ENCODE measurements at regions of chr17 and their contacts with region 1.

Region 1: DNA sequence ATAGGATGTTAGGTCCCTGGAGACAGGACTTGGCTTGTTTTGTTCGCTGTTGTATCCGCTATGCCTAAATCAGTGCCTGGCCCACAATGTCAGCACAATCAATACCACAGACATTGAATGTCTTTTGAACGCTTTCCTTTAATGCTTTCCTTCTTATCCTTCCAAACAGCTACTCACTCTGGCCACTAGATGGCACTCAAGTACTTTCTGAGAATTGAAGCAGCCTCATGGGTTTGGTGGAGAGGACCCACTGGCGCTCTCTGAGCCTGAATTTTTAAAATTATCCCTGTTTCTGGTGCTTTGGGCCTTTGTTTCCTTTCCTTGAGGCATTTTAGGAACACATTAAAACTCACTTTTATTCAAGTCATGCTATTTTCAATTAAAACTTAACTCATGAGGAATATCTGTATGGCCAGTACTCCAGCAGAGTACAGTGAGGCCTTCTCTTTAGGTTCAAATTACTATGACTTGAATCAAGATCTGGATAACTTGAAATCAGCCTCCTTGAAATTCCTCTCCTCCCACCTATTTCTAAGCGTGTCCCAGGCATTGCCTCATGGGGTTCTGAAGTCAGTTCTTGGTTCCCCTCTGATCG is 3.2 kb upstream of the NLRP1 start:
- DNase-seq: peak in 1 of 2 donors; percentile 92
- ATAC-seq: peak in 2 of 3 donors; percentile 16 to 25
- H3K4me3 ChIP-seq: no peak overlapping the region
- H3K4me3 Mint-ChIP-seq: peak overlapping the region; percentile 32
- H3K27ac ChIP-seq: no peak overlapping the region
- H3K27ac Mint-ChIP-seq: peak overlapping the region; percentile 49 to 59
- H3K4me1 ChIP-seq: peaks cover 35% of the 10 kb centered on the region
- H3K4me1 Mint-ChIP-seq: peaks cover 25 to 29% of the 10 kb centered on the region in 2 donors
- H3K27me3 ChIP-seq: no peaks in the 10 kb centered on the region
- H3K27me3 Mint-ChIP-seq: peaks cover 0 to 3% of the 10 kb centered on the region in 2 donors
- CTCF ChIP-seq: peak; percentile 81

Region 2: GRCh38 chr17:5598457-5598856 is 10.9 kb after region 1 on chr17:
- intact Hi-C with region 1: no loop called
- DNase-seq: no peak
- ATAC-seq: no peak
- H3K4me3 ChIP-seq: no peak overlapping the region
- H3K4me3 Mint-ChIP-seq: no peak overlapping the region
- H3K27ac ChIP-seq: no peak overlapping the region
- H3K27ac Mint-ChIP-seq: no peak overlapping the region
- H3K4me1 ChIP-seq: no peaks in the 10 kb centered on the region
- H3K4me1 Mint-ChIP-seq: no peaks in the 10 kb centered on the region
- H3K27me3 ChIP-seq: peaks cover 4% of the 10 kb centered on the region
- H3K27me3 Mint-ChIP-seq: peaks cover 41 to 78% of the 10 kb centered on the region in 2 donors
- CTCF ChIP-seq: no peak

Region 3: GRCh38 chr17:5706577-5707216 is 119.2 kb after region 1 on chr17:
- intact Hi-C with region 1: loop called (anchors 1 kb)
- DNase-seq: peak; percentile 50 to 75
- ATAC-seq: peak in 2 of 3 donors; percentile 57 to 76
- H3K4me3 ChIP-seq: no peak overlapping the region
- H3K4me3 Mint-ChIP-seq: no peak overlapping the region
- H3K27ac ChIP-seq: no peak overlapping the region
- H3K27ac Mint-ChIP-seq: no peak overlapping the region
- H3K4me1 ChIP-seq: no peaks in the 10 kb centered on the region
- H3K4me1 Mint-ChIP-seq: no peaks in the 10 kb centered on the region
- H3K27me3 ChIP-seq: no peaks in the 10 kb centered on the region
- H3K27me3 Mint-ChIP-seq: peaks cover 30 to 44% of the 10 kb centered on the region in 2 donors
- CTCF ChIP-seq: peak; percentile 60

Region 4: GRCh38 chr17:6421700-6422604 is 834.4 kb after region 1 on chr17:
- intact Hi-C with region 1: loop called (anchors 1 kb)
- DNase-seq: peak; percentile 68 to 82
- ATAC-seq: peak; percentile 73 to 92 (median 91)
- H3K4me3 ChIP-seq: no peak overlapping the region
- H3K4me3 Mint-ChIP-seq: no peak overlapping the region
- H3K27ac ChIP-seq: no peak overlapping the region
- H3K27ac Mint-ChIP-seq: peak overlapping the region in 1 of 2 donors; percentile 21
- H3K4me1 ChIP-seq: peaks cover 13% of the 10 kb centered on the region
- H3K4me1 Mint-ChIP-seq: peaks cover 3 to 11% of the 10 kb centered on the region in 2 donors
- H3K27me3 ChIP-seq: no peaks in the 10 kb centered on the region
- H3K27me3 Mint-ChIP-seq: peaks cover 15 to 22% of the 10 kb centered on the region in 2 donors
- CTCF ChIP-seq: peak; percentile 86

Region 5: GRCh38 chr17:6435968-6436367 is 848.4 kb after region 1 on chr17:
- intact Hi-C with region 1: loop called (anchors 1 kb)
- DNase-seq: peak; percentile 57 to 83
- ATAC-seq: peak; percentile 83 to 99 (median 99)
- H3K4me3 ChIP-seq: no peak overlapping the region
- H3K4me3 Mint-ChIP-seq: no peak overlapping the region
- H3K27ac ChIP-seq: no peak overlapping the region
- H3K27ac Mint-ChIP-seq: no peak overlapping the region
- H3K4me1 ChIP-seq: no peaks in the 10 kb centered on the region
- H3K4me1 Mint-ChIP-seq: peaks cover 0 to 5% of the 10 kb centered on the region in 2 donors
- H3K27me3 ChIP-seq: peaks cover 4% of the 10 kb centered on the region
- H3K27me3 Mint-ChIP-seq: peaks cover 20 to 32% of the 10 kb centered on the region in 2 donors
- CTCF ChIP-seq: peak; percentile 68

Measured in natural killer cell (primary cell).